Left ventricle myocardium inferior (tissue), 1 donor: ENCODE measurements at regions of chr1 and their contacts with region 1.

Region 1: GRCh38 chr1:77126307-77126706 is 92.9 kb downstream of the PIGK start:
- DNase-seq: no peak
- H3K4me3 ChIP-seq: no peak overlapping the region
- H3K27ac ChIP-seq: no peak overlapping the region
- H3K4me1 ChIP-seq: no peaks in the 10 kb centered on the region
- H3K27me3 ChIP-seq: no peaks in the 10 kb centered on the region
- CTCF ChIP-seq: peak; percentile 57

Region 2: GRCh38 chr1:76154206-76154956 is 971.9 kb before region 1 on chr1:
- intact Hi-C with region 1: loop called (anchors 10 kb)
- DNase-seq: peak; percentile 62
- H3K4me3 ChIP-seq: peak overlapping the region; percentile 55
- H3K27ac ChIP-seq: peak overlapping the region; percentile 69
- H3K4me1 ChIP-seq: peaks cover 29% of the 10 kb centered on the region
- H3K27me3 ChIP-seq: peaks cover under 1% of the 10 kb centered on the region
- CTCF ChIP-seq: peak; percentile 97